K562 (cell line): ENCODE measurements at regions of chr3 and their contacts with region 1.

Region 1: DNA sequence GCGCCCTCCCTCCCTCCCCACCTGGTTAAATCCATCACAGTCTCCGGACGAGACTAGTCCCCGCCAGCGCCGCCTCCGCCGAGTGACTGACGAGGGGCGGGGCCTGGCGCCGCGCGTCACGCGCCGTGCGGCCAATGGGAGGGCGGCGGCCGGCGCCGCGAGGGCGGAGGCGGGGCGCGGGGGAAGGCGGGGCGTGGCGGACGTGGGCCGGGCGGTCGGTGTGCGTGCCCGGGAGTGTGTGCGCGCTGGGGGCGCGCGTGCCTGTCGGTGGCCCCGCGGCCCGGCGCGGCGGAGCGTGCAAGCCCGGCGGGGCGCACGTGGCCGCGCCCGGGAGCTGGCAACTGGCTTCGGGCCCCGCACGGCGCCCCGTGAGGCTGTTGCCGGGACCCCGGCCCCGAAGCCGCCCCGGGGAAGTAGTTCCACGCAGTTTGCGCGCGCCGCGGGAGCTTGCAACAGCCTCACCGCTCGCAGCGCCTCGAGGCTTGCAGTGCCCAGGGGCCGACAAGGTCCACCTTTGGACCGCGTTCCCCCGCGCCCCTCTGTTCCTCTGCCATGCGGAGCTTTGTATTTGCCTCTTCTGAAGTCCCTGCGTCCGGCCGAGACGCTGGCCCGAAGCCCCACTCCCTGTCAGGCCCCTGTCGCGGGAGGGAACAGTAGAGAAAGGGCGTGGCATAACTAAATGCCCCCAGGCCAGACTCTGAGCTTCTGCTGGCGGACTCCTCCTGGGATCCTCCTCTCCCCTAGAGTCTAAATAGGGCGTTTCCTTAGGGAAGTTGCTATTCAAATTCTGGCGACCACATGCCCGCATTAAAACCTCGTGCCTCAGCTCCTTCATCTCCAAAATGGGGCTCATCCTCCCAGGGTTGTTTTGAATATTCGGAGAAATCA is 400.9 kb downstream of the SHQ1 start:
- DNase-seq: peak; percentile 82 to 89 (median 85)
- ATAC-seq: peak; percentile 58
- H3K4me3 ChIP-seq: peak overlapping the region; percentile 69
- H3K27ac ChIP-seq: peak overlapping the region; percentile 93
- H3K4me1 ChIP-seq: peaks cover 27 to 42% of the 10 kb centered on the region in 2 experiments
- H3K27me3 ChIP-seq: no peaks in the 10 kb centered on the region
- CTCF ChIP-seq: no peak
- EP300 ChIP-seq: no peak
- POLR2A ChIP-seq: 0 out of 2 replicates have a peak, but pooled peaks have one; percentile 36
- RAD21 ChIP-seq: no peak; a peak in 1 of 4 replicates

Region 2: GRCh38 chr3:72339116-72340030 is 107.9 kb before region 1 on chr3:
- CTCF ChIA-PET with region 1: no interaction called
- POLR2A ChIA-PET with region 1: no interaction called
- in situ Hi-C with region 1: no loop called
- intact Hi-C with region 1: loop called (anchors 1 kb)
- DNase-seq: peak; percentile 82 to 87 (median 84)
- ATAC-seq: peak; percentile 73
- H3K4me3 ChIP-seq: no peak overlapping the region
- H3K27ac ChIP-seq: peak overlapping the region; percentile 73; the same call in 2 of the 3 replicates
- H3K4me1 ChIP-seq: peaks cover 41 to 45% of the 10 kb centered on the region in 2 experiments
- H3K27me3 ChIP-seq: no peaks in the 10 kb centered on the region
- CTCF ChIP-seq: no peak
- EP300 ChIP-seq: peak; percentile 58; the same call in 1 of the 2 replicates
- POLR2A ChIP-seq: no peak
- RAD21 ChIP-seq: no peak

Region 3: DNA sequence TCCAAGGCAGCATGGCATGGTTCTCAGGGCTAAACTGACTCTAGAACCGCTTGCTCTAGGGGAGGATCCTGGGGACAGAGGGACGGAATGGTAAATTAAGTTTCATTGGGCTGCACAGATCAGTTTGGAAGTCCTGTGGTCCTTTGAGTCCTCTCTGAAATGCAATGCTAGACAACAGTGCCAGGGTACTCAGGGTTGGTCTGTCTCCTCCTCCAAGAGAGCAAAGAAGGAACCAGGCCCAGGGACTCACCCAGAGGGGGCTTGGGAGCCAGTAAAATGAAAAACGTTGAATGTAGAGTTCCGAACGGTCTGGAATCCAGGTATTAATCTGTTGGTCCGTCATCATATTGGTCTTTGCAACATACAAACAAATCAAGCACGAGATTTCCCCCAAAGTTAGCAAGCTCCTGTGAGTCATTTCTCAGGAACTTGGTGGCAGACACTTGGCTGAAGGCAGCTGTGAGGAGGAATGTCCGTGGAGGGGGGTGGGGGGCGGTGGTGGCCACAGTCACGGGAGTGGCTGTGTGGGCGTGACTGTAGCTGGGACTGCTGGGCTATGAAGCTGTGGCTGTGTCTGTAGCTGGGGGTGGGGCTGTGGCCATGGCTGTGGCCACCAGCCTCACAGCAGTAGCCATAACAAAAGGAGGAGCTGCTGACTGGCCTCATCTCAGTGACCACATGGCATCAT is 39.9 kb after region 1 on chr3:
- CTCF ChIA-PET with region 1: no interaction called
- POLR2A ChIA-PET with region 1: interaction called, 3 read pairs
- in situ Hi-C with region 1: no loop called
- intact Hi-C with region 1: loop called (anchors 5 kb)
- DNase-seq: peak; percentile 66 to 80 (median 78)
- ATAC-seq: peak; percentile 94
- H3K4me3 ChIP-seq: no peak overlapping the region
- H3K27ac ChIP-seq: no peak overlapping the region
- H3K4me1 ChIP-seq: peaks cover 4 to 17% of the 10 kb centered on the region in 2 experiments; a peak in 4 of 5 replicates
- H3K27me3 ChIP-seq: no peaks in the 10 kb centered on the region
- CTCF ChIP-seq: no peak
- EP300 ChIP-seq: no peak
- POLR2A ChIP-seq: no peak
- RAD21 ChIP-seq: no peak

Region 4: DNA sequence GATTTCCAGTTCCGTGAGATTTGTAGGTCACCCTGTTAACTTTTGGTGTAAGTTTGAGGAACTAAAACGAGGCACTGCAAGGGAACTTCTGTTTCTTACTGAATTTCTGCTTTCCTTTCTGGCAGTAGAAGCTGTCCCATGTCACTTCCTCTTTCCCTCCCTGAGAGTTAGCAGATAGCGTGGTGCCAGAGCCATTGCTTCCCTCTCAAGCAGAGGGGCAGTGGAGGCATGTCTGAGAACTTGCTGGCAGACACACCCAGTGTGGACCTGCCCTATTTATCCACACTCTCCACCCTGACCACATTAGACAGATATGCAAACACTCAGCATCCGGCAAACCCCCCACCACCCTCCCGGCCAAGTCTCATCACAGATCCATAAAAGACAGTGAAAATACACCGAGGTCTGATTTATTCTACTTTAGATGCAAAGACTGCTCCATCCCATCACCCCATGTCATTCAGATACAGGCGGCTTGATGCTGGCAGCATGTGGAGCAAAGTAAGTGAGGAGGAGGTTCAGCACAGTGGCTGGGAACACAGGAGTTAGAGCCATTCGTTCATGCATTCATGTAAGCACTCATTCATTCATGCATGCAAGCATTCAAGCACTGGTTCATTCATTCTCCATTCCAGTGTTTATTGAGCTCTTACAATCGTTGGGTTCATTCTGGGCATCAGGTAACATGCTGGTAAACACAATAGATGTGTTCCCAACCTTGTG is 76.3 kb after region 1 on chr3:
- CTCF ChIA-PET with region 1: no interaction called
- POLR2A ChIA-PET with region 1: no interaction called
- in situ Hi-C with region 1: no loop called
- intact Hi-C with region 1: loop called (anchors 5 kb)
- DNase-seq: peak in 2 of 4 experiments; percentile 22 to 55
- ATAC-seq: peak; percentile 86
- H3K4me3 ChIP-seq: no peak overlapping the region
- H3K27ac ChIP-seq: peak overlapping the region; percentile 48; the same call in 2 of the 3 replicates
- H3K4me1 ChIP-seq: peaks cover 0 to 18% of the 10 kb centered on the region in 2 experiments; a peak in 4 of 5 replicates
- H3K27me3 ChIP-seq: no peaks in the 10 kb centered on the region
- CTCF ChIP-seq: no peak
- EP300 ChIP-seq: no peak
- POLR2A ChIP-seq: no peak
- RAD21 ChIP-seq: peak in 1 of 2 experiments; percentile 25; a peak in 1 of 4 replicates

Region 5: DNA sequence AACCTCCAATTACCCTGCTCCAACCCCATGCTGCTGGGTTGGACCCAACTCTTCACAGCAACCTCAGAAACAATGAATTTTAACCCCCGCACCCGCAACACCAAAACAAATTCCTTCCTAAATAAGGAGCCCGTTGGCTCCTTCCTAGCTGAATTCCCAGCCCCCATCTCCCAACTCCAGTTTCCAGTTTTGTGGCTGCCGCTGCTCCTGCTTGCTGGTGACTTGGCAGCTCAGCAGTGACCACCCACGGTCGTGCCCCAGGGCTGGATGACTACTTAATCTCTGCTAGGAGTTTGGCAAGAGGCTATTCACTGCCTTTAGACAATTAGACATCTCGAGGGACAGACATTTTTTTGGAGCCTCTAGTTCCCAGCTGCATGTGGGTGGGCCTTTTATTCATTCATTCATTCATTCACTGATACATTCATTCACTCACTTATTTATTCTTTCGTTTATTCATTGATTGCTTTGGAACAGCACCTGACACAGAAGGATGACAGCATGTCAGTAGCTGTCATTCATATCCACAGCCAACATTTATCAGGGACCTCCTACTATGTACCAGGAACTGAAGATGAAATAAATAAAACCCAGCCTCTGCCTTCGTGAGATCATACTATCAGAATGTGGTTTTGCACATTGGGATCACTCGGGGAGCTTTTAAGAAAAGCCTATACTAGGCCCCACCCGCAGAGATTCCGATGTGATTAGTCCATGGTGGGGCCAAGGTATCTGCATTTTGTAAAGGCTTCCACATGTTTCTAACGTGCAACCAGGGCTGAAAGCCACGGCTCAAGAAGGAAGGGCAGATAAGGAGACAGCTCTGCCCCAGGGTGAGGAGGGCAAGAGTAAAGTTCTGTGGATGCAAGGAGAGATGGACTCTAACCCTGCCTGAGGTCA is 144.5 kb after region 1 on chr3:
- CTCF ChIA-PET with region 1: no interaction called
- POLR2A ChIA-PET with region 1: no interaction called
- in situ Hi-C with region 1: no loop called
- intact Hi-C with region 1: loop called (anchors 5 kb)
- DNase-seq: peak; percentile 30 to 65 (median 36)
- ATAC-seq: peak; percentile 42
- H3K4me3 ChIP-seq: no peak overlapping the region
- H3K27ac ChIP-seq: no peak overlapping the region
- H3K4me1 ChIP-seq: peaks cover 29 to 37% of the 10 kb centered on the region in 2 experiments; a peak in 4 of 5 replicates
- H3K27me3 ChIP-seq: no peaks in the 10 kb centered on the region
- CTCF ChIP-seq: no peak
- EP300 ChIP-seq: no peak
- POLR2A ChIP-seq: no peak
- RAD21 ChIP-seq: no peak

Region 6: DNA sequence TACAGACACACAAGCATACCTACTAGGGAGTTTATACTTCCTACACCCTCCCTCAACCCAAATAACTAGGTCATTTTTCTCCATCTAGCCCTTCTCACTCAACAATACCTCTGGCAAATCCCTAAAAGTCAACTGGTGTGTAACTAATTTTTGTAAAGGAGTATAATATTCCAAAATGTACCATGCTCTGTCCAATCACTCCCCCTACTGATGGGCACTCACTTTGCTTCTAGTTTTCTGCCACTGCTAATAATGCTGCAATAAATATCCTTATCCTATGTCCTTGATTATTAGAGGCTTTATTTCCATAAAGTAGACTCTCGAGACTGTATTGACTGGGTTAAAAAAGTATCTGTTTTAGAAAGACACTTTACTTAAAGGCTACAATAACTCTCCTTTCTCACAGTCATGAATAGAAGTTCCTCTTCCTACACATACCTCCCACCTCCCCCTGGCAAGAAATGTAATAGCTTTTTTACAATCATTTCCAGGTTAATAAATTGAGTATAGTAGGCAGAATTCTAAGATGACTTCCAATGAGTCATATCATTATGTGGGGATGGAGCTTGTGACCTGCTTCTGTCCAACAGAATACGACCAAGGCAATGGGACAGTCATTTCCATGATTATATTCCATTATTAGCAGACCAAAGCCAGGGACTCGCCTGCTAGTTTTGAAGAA is 370.9 kb after region 1 on chr3:
- CTCF ChIA-PET with region 1: no interaction called
- POLR2A ChIA-PET with region 1: no interaction called
- in situ Hi-C with region 1: no loop called
- intact Hi-C with region 1: loop called (anchors 10 kb)
- DNase-seq: peak in 1 of 4 experiments; percentile 12
- ATAC-seq: peak; percentile 50; the same call in 1 of the 3 replicates
- H3K4me3 ChIP-seq: no peak overlapping the region
- H3K27ac ChIP-seq: no peak overlapping the region
- H3K4me1 ChIP-seq: peaks cover 0 to 7% of the 10 kb centered on the region in 2 experiments; a peak in 2 of 5 replicates
- H3K27me3 ChIP-seq: no peaks in the 10 kb centered on the region
- CTCF ChIP-seq: peak in 2 of 3 experiments; percentile 60 to 71; a peak in 4 of 6 replicates
- EP300 ChIP-seq: no peak
- POLR2A ChIP-seq: no peak
- RAD21 ChIP-seq: peak; percentile 76 to 84